Activated naive CD8-positive, alpha-beta T cell treated with anti-CD3 and anti-CD28 coated beads, Interleukin-2, amount 10 ng/mL, durations not matched to agents 7 days and 5 days (primary cell): ENCODE measurements at regions of chr22 and their contacts with region 1.

Region 1: DNA sequence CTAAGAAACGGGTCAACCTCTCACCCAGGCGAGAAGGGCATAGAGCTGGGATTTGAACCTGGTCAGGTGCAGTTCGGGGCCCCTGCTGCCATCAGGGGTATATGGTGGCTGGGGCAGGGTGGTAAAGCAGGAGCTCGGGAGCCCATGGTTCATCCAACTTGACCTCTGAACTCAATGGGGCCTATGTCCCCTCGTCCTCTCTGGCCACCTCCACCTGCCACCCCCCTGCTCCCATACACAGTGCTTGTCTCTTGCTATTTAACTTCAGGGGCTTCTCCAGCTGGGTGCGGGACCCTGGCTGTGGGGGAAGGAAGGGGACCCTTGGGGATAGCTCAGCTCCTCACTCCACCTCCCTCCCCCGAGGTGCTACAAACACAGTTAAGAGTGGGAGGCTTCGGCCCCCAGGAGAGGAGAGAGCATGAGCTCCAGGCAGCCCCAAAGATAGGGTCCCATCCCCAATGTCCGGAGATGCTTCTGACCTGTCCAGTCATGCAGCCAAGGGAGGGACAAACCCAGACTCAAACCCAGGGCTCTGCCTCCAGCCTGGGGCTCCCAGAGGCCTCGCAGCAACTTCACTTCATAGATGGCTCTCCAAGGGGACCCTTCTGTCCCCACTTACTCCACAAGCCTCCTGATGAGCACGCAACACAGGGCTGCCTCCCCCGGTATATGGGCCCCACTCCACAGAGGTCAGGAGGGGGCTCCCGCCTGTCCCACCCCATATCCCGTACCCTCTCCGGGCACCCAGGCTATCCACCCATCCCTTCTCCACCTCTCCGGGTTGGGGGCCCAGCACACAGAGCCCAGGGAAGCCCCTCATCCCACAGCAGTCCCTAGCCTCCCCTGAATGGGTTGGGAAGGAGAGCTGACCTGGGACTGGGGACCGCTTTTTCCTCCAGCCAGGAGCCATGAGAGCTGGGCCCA is 712 bp downstream of the IL2RB start:
- DNase-seq: no peak
- ATAC-seq: no peak
- H3K4me3 Mint-ChIP-seq: peak overlapping the region; percentile 95
- H3K27ac Mint-ChIP-seq: peak overlapping the region; percentile 95
- H3K4me1 Mint-ChIP-seq: peaks cover 48% of the 10 kb centered on the region
- H3K27me3 Mint-ChIP-seq: no peaks in the 10 kb centered on the region

Region 2: DNA sequence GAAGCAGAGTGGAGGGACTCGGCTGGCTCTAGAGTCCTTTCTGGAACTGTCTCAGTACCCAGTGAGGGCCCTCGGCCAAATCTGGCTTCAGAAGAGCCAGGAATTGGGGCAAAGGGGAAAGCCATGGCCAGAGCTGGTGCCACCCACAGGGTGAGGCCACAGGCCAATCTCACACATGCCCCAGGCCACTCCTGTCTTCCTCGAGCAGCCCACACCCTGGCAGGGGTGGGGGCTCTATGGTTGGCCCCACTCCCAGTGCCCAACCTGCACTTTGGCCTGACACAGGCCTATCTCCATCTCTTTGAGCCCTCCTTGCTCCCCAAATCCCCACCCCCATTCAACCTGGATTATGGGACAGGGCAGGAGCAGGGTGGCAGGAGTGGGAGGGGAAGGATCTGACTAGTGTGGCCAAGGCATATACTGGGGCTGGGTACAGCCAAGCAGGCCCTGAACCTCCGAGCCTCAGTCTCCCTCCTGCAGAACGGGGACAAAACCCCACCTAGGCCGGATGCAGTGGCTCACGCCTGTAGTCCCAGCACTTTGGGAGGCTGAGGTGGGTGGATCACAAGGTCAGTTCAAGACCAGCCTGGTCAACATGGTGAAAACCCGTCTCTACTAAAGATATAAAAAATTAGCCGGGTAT is 136.6 kb before region 1 on chr22:
- POLR2A ChIA-PET with region 1: no interaction called
- DNase-seq: no peak
- ATAC-seq: no peak
- H3K4me3 Mint-ChIP-seq: no peak overlapping the region
- H3K27ac Mint-ChIP-seq: no peak overlapping the region
- H3K4me1 Mint-ChIP-seq: peaks cover 3% of the 10 kb centered on the region
- H3K27me3 Mint-ChIP-seq: peaks cover 10% of the 10 kb centered on the region

Region 3: DNA sequence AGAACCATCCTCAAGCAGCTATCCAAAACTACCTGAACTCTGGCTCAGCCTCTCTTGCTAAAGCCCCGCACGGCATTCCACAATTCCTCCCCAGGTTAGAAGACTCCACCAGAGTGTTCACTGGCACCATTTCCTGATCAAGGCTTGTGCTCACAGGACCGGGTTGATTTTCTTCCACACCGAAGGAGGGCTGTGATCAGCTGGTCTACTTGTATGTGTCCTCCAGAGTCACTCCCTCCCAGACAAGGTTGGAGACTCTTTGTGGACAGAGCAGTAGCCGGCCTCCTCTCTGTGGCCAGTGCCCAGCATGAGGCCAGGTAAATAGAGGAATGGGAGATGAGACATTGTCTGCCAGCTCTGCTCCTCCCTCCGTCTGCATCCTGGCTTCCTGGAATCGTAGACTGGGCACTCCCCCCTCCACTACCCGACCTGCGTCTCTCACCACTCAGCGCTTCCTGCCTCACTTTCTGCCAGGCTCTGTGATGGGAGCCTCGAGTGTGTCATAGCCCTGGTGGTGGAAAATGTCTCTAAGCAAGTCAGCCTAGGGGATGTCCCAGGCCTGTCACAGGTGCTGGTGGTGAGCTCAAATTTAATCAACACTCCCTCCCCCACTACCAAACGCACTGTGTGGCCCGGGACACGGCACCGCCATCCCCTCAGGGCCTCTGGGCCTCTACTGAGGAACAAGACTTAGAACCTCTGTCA is 27.0 kb before region 1 on chr22:
- POLR2A ChIA-PET with region 1: interaction called, 167 read pairs
- DNase-seq: peak; percentile 82
- ATAC-seq: peak; percentile 98
- H3K4me3 Mint-ChIP-seq: peak overlapping the region; percentile 85
- H3K27ac Mint-ChIP-seq: peak overlapping the region; percentile 98
- H3K4me1 Mint-ChIP-seq: peaks cover 64% of the 10 kb centered on the region
- H3K27me3 Mint-ChIP-seq: no peaks in the 10 kb centered on the region

Region 4: GRCh38 chr22:37166675-37167066 is 17.7 kb after region 1 on chr22:
- POLR2A ChIA-PET with region 1: interaction called, 200 read pairs
- DNase-seq: peak; percentile 87
- ATAC-seq: peak; percentile 49
- H3K4me3 Mint-ChIP-seq: peak overlapping the region; percentile 80
- H3K27ac Mint-ChIP-seq: peak overlapping the region; percentile 89
- H3K4me1 Mint-ChIP-seq: peaks cover 87% of the 10 kb centered on the region
- H3K27me3 Mint-ChIP-seq: no peaks in the 10 kb centered on the region

Region 5: GRCh38 chr22:37199103-37199759 is 50.2 kb after region 1 on chr22:
- POLR2A ChIA-PET with region 1: interaction called, 46 read pairs
- DNase-seq: peak; percentile 100
- ATAC-seq: peak; percentile 97
- H3K4me3 Mint-ChIP-seq: peak overlapping the region; percentile 81
- H3K27ac Mint-ChIP-seq: peak overlapping the region; percentile 97
- H3K4me1 Mint-ChIP-seq: peaks cover 37% of the 10 kb centered on the region
- H3K27me3 Mint-ChIP-seq: no peaks in the 10 kb centered on the region

Region 6: DNA sequence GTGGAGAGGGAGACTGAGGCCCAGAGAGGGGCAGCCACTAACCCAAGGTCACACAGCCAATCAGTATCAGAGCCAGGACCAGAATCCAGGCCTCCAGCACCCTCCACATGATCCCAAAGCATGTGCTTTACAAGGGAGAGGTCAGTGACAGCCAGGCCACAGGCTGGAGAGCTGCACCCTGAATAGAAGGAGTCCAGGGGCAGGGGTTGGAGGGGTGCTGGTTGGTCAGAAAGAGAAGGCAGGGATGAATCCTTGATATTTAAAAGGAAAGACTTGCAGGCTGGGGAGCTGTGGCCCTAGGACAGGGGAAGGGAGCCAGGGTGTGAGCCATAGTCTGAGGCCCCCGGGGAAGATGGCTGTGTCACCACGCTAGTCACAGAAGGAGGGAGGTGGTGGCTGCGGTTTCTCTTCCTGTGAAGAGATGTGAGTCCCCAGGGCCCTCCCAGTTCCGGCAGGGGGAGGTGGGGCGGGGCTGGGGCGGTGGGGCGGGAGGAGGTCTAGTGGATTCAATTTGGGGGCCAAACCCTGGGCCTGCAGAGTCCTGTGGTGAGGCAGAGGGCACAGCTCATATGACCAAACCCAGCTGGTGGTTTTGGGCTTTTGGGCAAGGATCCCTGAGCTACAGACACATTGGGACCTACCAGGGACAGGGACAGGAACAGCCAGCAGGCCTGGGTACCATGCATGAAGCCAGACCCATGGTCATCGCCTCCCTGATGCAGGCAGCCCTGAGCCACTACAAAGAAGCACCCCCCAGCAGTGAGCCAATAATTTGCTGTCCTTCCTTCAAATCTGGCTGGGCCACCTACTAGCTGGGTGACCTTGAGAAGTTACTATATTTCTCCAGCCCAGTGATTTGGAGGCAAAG is 81.0 kb after region 1 on chr22:
- POLR2A ChIA-PET with region 1: interaction called, 11 read pairs
- DNase-seq: peak; percentile 84
- ATAC-seq: peak; percentile 59
- H3K4me3 Mint-ChIP-seq: peak overlapping the region; percentile 84
- H3K27ac Mint-ChIP-seq: peak overlapping the region; percentile 99
- H3K4me1 Mint-ChIP-seq: peaks cover 85% of the 10 kb centered on the region
- H3K27me3 Mint-ChIP-seq: no peaks in the 10 kb centered on the region